Activated CD8-positive, alpha-beta T cell treated with anti-CD3 and anti-CD28 coated beads, Interleukin-2, amount 10 ng/mL, durations not matched to agents 7 days and 5 days (primary cell): ENCODE measurements at regions of chr16 and their contacts with region 1.

Region 1: GRCh38 chr16:57519796-57520360 is 16.5 kb downstream of the CCDC102A start:
- DNase-seq: peak; percentile 88
- ATAC-seq: peak; percentile 97
- H3K4me3 Mint-ChIP-seq: no peak overlapping the region
- H3K27ac Mint-ChIP-seq: peak overlapping the region; percentile 32
- H3K4me1 Mint-ChIP-seq: peaks cover 17% of the 10 kb centered on the region
- H3K27me3 Mint-ChIP-seq: no peaks in the 10 kb centered on the region

Region 2: DNA sequence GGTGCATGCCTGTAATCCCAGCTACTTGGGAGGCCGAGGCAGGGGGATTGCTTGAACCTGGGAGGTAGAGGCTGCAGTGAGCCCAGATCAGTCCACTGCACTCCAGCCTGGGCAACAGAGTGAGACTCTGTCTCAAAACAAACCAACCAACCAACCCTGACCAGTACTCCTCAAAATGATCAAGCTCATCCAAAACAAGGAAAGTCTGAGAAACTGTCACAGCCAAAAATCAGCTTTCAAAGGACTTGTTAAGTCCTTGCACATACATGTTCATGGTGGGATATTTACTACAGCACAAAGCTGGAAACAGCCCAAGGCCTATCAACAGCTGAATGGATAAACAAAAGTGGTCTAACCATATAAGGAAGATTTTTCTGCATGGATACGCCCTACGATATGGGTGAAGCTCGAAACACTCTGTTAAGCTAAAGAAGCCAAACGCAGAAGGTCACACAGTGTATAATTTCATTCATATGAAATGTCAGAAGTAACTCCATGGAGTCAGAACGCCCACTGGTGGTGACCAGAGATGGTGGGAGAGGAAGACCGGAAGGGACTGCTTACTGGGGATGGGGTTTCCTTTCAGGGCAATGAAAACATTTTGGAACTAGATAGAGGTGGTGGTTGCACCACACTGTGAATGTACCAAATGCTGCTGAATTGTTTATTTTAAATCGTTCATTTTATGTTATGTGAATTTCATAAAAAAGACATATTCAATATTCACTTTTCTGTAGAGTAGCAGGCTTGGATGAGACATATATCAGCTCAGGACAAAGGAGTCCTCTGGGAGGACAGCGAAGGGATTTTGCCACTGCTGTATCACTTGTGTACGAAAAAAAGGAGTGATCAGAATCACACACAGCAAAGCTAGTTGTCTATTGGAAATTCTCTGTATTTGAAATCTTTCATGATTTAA is 97.6 kb before region 1 on chr16:
- CTCF ChIA-PET with region 1: interaction called, 156 read pairs
- POLR2A ChIA-PET with region 1: no interaction called
- DNase-seq: no peak
- ATAC-seq: no peak
- H3K4me3 Mint-ChIP-seq: no peak overlapping the region
- H3K27ac Mint-ChIP-seq: no peak overlapping the region
- H3K4me1 Mint-ChIP-seq: peaks cover 18% of the 10 kb centered on the region
- H3K27me3 Mint-ChIP-seq: no peaks in the 10 kb centered on the region

Region 3: DNA sequence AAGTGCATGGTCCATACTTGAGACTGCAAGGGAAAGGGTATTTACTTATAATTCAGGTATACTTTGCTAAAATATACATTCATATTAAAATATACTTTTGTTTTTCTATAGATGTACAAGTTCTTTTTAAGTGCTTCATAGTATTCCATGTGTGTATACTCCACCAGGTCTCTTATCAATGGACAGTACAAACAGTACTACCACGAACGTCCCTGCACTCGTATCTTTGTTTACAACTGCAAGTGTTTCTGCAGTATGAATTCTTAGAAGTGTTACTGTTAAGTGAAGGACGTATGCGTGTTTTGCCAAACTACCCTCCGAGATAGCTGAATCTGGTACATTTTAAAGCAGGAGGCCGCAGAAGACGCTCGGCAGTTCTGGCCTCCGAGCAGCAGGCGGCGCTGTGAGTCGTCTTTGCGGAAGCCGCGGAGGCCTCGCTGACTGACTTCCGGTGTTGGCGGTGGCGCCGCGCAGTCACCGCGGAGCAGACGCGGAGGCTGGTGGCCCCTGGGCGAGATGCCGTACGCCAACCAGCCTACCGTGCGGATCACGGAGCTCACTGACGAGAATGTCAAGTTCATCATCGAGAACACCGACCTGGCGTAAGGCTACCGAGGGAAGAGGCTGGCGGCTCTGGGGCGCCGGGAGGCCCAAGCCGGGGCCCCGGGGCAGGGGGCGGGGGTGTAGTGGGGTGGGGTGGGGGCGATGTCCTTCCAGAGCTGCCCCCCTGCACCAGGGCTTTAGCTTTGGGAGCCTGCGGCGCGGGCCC is 57.5 kb before region 1 on chr16 and contains the start of gene POLR2C:
- CTCF ChIA-PET with region 1: interaction called, 63 read pairs
- POLR2A ChIA-PET with region 1: interaction called, 6 read pairs
- DNase-seq: peak; percentile 95
- ATAC-seq: peak; percentile 97
- H3K4me3 Mint-ChIP-seq: peak within 1 kb of the TSS; percentile 100
- H3K27ac Mint-ChIP-seq: peak within 1 kb of the TSS; percentile 100
- H3K4me1 Mint-ChIP-seq: peaks cover 29% of the 10 kb centered on the region
- H3K27me3 Mint-ChIP-seq: no peaks in the 10 kb centered on the region
- total RNA-seq, gene POLR2C: 57.0 to 58.3 TPM

Region 4: DNA sequence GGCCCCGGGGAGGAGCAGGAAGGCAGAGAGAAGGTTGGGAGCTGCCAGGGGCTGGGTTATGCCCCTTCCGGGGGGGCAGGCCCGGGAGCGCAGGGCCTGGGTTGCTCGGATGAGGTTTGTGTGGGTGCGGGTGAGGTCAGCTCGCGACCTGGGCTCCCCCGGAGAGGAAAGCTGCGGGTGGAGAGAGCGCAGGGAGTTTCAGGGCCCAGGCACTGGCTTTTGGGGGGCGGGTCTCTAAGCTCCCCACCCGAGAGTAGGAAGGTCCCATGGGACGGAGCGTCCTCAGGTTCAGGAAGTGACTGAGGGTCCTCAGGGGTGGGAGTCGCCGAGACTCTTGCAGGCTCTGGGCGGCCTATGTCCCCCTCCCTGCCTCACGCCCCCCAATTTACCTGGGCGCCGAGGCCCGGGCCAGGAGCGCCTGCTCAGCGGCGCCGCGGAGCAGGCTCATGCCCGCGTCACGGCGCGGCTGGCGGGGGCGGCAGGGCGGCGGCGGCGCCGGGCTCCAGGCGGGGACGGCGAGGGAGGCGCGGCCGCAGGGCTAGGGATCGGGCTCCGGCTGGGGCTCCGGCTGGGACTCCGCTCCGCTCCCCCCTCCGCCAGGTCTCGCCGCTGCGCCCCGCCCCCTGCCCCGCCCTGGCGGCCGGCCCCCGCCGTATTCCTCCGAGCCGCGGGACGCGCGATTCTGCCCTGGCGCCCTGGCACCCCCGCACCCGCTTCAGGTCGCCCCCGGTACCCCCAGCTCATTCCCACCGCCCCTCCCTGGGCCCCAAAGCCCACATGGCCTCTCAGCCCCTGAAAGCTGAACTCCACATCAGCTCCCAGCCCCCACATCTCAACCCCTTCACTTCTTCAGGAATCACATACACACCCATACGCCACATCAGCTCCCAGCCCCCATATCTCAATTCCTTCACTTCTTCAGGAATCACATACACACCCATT is 33.7 kb before region 1 on chr16 and contains the start of gene DOK4:
- CTCF ChIA-PET with region 1: interaction called, 43 read pairs
- POLR2A ChIA-PET with region 1: interaction called, 5 read pairs
- DNase-seq: peak; percentile 82
- ATAC-seq: peak; percentile 99
- H3K4me3 Mint-ChIP-seq: peak within 1 kb of the TSS; percentile 76
- H3K27ac Mint-ChIP-seq: peak within 1 kb of the TSS; percentile 76
- H3K4me1 Mint-ChIP-seq: peaks cover 19% of the 10 kb centered on the region
- H3K27me3 Mint-ChIP-seq: peaks cover 5% of the 10 kb centered on the region
- total RNA-seq, gene DOK4: 4.8 to 6.4 TPM

Region 5: GRCh38 chr16:57535680-57536305 is 15.9 kb after region 1 on chr16:
- CTCF ChIA-PET with region 1: interaction called, 11 read pairs
- POLR2A ChIA-PET with region 1: interaction called, 3 read pairs
- DNase-seq: peak; percentile 94
- ATAC-seq: peak; percentile 87
- H3K4me3 Mint-ChIP-seq: peak overlapping the region; percentile 85
- H3K27ac Mint-ChIP-seq: peak overlapping the region; percentile 87
- H3K4me1 Mint-ChIP-seq: peaks cover 82% of the 10 kb centered on the region
- H3K27me3 Mint-ChIP-seq: no peaks in the 10 kb centered on the region

Region 6: DNA sequence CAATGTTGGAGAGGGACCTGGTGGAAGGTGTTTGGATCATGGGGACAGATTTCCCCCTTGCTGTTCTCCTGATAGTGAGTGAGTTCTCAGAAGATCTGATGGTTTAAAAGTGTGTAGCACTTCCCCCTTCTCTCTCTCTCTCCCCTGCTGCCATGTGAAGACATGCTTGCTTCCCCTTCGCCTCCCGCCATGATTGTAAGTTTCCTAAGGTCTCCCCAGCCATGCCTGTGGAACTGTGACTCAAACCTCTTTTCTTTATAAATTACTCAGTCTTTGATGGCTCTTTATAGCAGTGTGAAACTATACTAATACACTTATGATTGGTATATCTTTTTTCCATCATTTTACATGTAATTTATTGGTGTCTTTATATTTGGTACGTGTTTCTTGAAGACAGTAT is 36.0 kb after region 1 on chr16:
- CTCF ChIA-PET with region 1: no interaction called
- POLR2A ChIA-PET with region 1: no interaction called
- DNase-seq: peak; percentile 9
- ATAC-seq: no peak
- H3K4me3 Mint-ChIP-seq: no peak overlapping the region
- H3K27ac Mint-ChIP-seq: no peak overlapping the region
- H3K4me1 Mint-ChIP-seq: peaks cover 32% of the 10 kb centered on the region
- H3K27me3 Mint-ChIP-seq: peaks cover 2% of the 10 kb centered on the region